Calu3 (cell line): ENCODE measurements at regions of chr17 and their contacts with region 1.

Region 1: DNA sequence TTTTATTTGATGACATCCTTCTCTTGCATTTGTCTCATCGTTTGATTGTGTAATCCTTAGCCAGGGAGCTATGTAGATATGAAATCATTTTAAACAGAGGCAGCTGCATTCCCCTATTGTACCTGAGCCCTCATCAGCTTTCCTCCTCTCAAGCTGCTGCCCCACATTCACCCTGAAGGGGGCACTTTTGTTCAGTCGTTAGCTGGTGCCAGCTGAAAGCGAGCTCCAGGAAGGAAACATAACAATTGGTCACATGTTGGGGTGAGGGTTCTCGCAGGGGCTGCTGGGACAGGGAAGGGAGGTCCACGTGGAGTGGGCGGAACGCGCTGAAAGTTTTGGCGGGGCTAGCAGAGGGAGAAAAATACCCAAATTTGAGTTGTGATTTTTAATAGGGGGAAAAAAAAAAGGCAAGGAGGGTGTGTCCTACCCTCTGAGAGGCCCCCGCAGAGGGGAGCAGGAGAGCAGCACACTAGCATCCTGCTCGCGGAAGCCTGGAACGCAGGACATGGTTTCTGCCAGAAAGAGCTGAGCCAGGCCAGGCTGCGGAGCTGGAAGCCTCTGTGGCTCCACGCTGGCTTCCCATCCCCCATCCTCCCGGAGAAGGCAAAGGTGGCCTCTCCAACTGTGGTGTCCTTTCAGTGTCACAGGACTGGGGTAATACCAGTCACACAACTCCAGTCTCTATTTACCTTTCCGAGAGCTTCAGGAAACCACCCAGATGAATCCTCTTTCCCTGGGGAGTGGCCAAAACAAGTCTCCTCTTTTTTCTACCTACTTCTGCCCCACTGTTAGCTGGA is 8.5 kb upstream of the MSL1 start:
- DNase-seq: peak; percentile 100
- H3K4me3 Mint-ChIP-seq: peak overlapping the region; percentile 65
- H3K27ac Mint-ChIP-seq: peak overlapping the region; percentile 74
- H3K4me1 Mint-ChIP-seq: peaks cover 58% of the 10 kb centered on the region
- H3K27me3 Mint-ChIP-seq: no peaks in the 10 kb centered on the region
- CTCF ChIP-seq: no peak

Region 2: GRCh38 chr17:39636927-39637736 is 476.2 kb before region 1 on chr17 and contains the start of gene STARD3:
- CTCF ChIA-PET with region 1: interaction called, 4 read pairs
- intact Hi-C with region 1: loop called (anchors 10 kb)
- DNase-seq: no peak
- H3K4me3 Mint-ChIP-seq: peak within 1 kb of the TSS; percentile 71
- H3K27ac Mint-ChIP-seq: peak within 1 kb of the TSS; percentile 28
- H3K4me1 Mint-ChIP-seq: peaks cover 61% of the 10 kb centered on the region
- H3K27me3 Mint-ChIP-seq: peaks cover 5% of the 10 kb centered on the region
- CTCF ChIP-seq: no peak
- total RNA-seq, gene STARD3: 2,579 and 2,697 TPM in 2 replicates

Region 3: GRCh38 chr17:39939588-39940419 is 173.5 kb before region 1 on chr17:
- CTCF ChIA-PET with region 1: interaction called, 13 read pairs
- intact Hi-C with region 1: no loop called
- DNase-seq: peak; percentile 76
- H3K4me3 Mint-ChIP-seq: no peak overlapping the region
- H3K27ac Mint-ChIP-seq: no peak overlapping the region
- H3K4me1 Mint-ChIP-seq: peaks cover 12% of the 10 kb centered on the region
- H3K27me3 Mint-ChIP-seq: peaks cover 63% of the 10 kb centered on the region
- CTCF ChIP-seq: no peak

Region 4: GRCh38 chr17:40068917-40069750 is 44.2 kb before region 1 on chr17:
- CTCF ChIA-PET with region 1: interaction called, 670 read pairs
- intact Hi-C with region 1: loop called (anchors 2 kb)
- DNase-seq: peak; percentile 71
- H3K4me3 Mint-ChIP-seq: peak overlapping the region; percentile 63
- H3K27ac Mint-ChIP-seq: no peak overlapping the region
- H3K4me1 Mint-ChIP-seq: peaks cover 94% of the 10 kb centered on the region
- H3K27me3 Mint-ChIP-seq: no peaks in the 10 kb centered on the region
- CTCF ChIP-seq: no peak

Region 5: GRCh38 chr17:40139566-40140058 is 26.3 kb after region 1 on chr17:
- CTCF ChIA-PET with region 1: interaction called, 185 read pairs
- intact Hi-C with region 1: loop called (anchors 1 kb)
- DNase-seq: peak; percentile 72
- H3K4me3 Mint-ChIP-seq: peak overlapping the region; percentile 98
- H3K27ac Mint-ChIP-seq: peak overlapping the region; percentile 98
- H3K4me1 Mint-ChIP-seq: peaks cover 45% of the 10 kb centered on the region
- H3K27me3 Mint-ChIP-seq: no peaks in the 10 kb centered on the region
- CTCF ChIP-seq: no peak

Region 6: GRCh38 chr17:40219073-40219860 is 106.0 kb after region 1 on chr17 and contains the start of gene WIPF2:
- CTCF ChIA-PET with region 1: interaction called, 69 read pairs
- intact Hi-C with region 1: no loop called
- DNase-seq: peak; percentile 100
- H3K4me3 Mint-ChIP-seq: peak within 1 kb of the TSS; percentile 78
- H3K27ac Mint-ChIP-seq: peak within 1 kb of the TSS; percentile 36
- H3K4me1 Mint-ChIP-seq: peaks cover 31% of the 10 kb centered on the region
- H3K27me3 Mint-ChIP-seq: no peaks in the 10 kb centered on the region
- CTCF ChIP-seq: no peak
- total RNA-seq, gene WIPF2: 327 and 376 TPM in 2 replicates

Region 7: DNA sequence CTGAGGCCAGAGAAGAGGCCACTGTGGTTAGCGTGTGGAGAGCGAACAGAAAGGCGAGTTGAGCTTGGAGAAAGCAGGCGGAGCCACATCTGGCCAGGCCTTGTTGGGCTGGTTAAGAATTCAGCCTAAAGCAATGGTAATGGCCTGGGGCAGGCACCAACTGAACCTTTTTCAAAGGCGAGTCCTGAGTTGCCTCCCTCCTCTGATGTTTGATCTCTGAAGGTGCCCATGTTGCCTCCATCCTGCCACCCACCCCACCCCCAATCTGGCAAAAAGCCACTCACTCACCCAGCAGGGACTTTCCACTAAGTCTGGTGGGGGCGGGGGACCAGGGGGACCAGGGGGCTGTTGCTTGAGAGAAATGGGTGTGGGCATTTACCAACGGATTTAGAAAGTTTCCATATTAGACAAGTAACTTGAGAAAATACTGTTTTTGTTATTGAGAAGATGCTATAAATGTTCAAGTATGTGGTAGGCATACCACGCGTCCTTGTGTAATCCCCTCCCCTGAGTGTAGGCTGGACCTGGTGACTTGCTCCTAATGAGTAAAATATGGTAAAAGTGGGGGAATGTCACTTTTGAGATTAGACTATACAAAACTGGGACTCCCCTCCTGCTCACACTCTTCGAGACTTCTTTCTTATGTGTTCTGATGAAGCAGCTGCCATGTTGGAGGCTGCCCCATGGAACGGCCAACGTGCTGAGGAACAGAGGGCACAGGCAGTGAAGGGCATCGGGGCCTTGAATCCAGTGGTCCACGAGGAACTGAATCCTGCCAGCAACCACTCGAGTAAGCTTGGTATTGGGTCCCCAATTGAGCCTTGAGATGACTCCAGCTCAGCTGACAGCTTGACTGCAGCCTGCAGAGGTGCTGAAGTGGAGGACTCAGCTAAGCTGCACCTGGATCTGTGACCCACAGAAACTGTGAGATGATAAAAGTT is 418.0 kb after region 1 on chr17:
- CTCF ChIA-PET with region 1: interaction called, 25 read pairs
- intact Hi-C with region 1: no loop called
- DNase-seq: no peak
- H3K4me3 Mint-ChIP-seq: no peak overlapping the region
- H3K27ac Mint-ChIP-seq: no peak overlapping the region
- H3K4me1 Mint-ChIP-seq: peaks cover 19% of the 10 kb centered on the region
- H3K27me3 Mint-ChIP-seq: peaks cover 48% of the 10 kb centered on the region
- CTCF ChIP-seq: no peak